ENCODE measurements at regions of chr15 and their contacts with region 1.

Region 1: GRCh38 chr15:23642413-23643044 is 5.1 kb downstream of the MAGEL2 start:
- DNase-seq: peak; percentile 76
- H3K4me3 ChIP-seq: no peak overlapping the region
- H3K27ac ChIP-seq: no peak overlapping the region
- H3K4me1 ChIP-seq: no peaks in the 10 kb centered on the region
- H3K27me3 ChIP-seq: no peaks in the 10 kb centered on the region

Region 2: DNA sequence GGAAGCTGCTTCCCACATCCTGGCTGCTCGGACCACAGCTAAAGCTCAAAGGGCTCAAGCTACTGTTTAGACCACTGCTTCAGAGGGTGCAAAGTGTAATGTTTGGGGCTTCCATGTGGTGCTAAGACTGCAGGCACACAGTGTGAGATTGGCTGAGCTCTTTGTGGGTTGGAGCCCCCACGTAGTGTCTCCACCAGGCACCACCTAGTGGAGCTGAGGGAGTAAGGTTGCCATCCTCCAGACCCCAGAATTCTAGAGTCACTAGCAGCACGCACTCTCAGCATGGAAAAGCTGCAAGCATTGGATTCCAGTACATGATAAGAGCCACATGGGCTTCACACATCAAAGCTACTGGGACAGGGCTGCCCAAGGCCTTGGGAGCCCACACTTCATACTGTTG is 67.8 kb before region 1 on chr15:
- in situ Hi-C with region 1: no loop called
- DNase-seq: no peak
- H3K4me3 ChIP-seq: no peak overlapping the region
- H3K27ac ChIP-seq: no peak overlapping the region
- H3K4me1 ChIP-seq: no peaks in the 10 kb centered on the region
- H3K27me3 ChIP-seq: no peaks in the 10 kb centered on the region

Region 3: GRCh38 chr15:23734862-23735261 is 92.3 kb after region 1 on chr15:
- in situ Hi-C with region 1: no loop called
- DNase-seq: no peak
- H3K4me3 ChIP-seq: no peak overlapping the region
- H3K27ac ChIP-seq: no peak overlapping the region
- H3K4me1 ChIP-seq: no peaks in the 10 kb centered on the region
- H3K27me3 ChIP-seq: no peaks in the 10 kb centered on the region

Region 4: DNA sequence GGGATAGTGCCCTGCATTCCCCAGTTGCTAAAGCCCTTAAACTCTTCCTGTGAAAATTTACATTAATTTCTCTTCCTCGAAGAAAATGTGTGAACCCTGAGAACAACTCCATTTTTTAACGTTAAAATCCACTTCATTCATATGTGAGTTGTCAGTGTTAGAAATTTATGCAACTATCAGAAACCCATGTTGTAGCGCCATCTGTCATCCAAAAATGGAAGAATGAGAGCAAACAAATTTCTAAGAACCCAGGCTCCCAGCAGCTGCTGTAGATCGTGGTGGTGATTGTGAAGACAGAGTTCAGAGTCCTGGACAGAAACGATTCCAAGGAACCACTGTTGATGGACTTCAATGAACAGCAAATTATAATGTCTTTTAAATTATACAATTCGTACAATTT is 224.3 kb after region 1 on chr15:
- in situ Hi-C with region 1: loop called (anchors 10 kb)
- DNase-seq: peak; percentile 16
- H3K4me3 ChIP-seq: no peak overlapping the region
- H3K27ac ChIP-seq: no peak overlapping the region
- H3K4me1 ChIP-seq: no peaks in the 10 kb centered on the region
- H3K27me3 ChIP-seq: no peaks in the 10 kb centered on the region

Region 5: GRCh38 chr15:25481207-25481859 is 1838.8 kb after region 1 on chr15:
- in situ Hi-C with region 1: loop called (anchors 25 kb)
- DNase-seq: peak; percentile 28
- H3K4me3 ChIP-seq: no peak overlapping the region
- H3K27ac ChIP-seq: no peak overlapping the region
- H3K4me1 ChIP-seq: no peaks in the 10 kb centered on the region
- H3K27me3 ChIP-seq: no peaks in the 10 kb centered on the region; the same call in 1 of the 2 replicates